ENCODE measurements at regions of chr17 and their contacts with region 1.

Region 1: DNA sequence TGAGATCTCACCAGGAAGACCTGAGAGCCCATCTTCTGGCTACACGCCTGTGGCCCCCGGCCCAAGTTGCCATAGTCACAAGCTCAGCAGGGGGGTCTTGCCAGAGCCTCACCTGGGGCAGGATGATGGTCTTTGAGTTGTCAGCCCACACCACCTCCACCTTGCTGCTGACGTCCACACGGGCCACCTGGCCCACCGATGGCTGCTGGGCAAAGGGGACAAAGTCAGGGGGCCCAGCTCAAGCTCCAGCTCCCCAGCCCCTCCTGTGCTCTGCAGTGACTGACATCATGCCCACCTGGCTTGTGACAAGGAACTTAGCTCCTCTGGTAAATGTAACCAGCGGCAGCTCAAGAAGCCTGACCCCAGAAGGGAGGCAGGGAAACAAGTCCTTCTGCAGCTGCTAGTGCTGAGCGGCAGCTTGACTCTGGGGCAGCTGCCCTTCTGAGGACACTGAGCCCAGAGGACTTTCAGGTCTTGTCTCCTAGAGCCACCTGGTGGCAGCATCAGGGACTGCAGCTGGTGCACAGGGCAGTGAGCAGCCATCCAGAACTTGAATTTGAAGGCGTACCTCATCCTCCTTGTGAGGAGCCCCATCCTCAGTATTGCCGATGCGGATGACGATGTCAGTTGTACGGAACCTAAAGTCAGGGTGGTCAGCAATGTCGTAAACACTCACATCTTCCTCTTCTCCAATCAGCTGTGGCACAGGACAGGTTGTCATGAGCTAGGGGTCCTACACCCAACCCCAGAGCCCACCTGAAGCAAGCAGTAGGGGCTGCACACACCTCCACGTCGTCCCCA is 13.5 kb downstream of the SPHK1 start:
- H3K4me3 ChIP-seq: no peak overlapping the region
- H3K27ac ChIP-seq: no peak overlapping the region
- H3K4me1 ChIP-seq: no peaks in the 10 kb centered on the region
- CTCF ChIP-seq: peak; percentile 86

Region 2: GRCh38 chr17:76296186-76296585 is 101.7 kb before region 1 on chr17:
- CTCF ChIA-PET with region 1: interaction called, 244 read pairs
- POLR2A ChIA-PET with region 1: no interaction called
- H3K4me3 ChIP-seq: no peak overlapping the region
- H3K27ac ChIP-seq: no peak overlapping the region
- H3K4me1 ChIP-seq: no peaks in the 10 kb centered on the region
- CTCF ChIP-seq: no peak

Region 3: GRCh38 chr17:76337413-76337777 is 60.5 kb before region 1 on chr17:
- CTCF ChIA-PET with region 1: interaction called, 14 read pairs
- POLR2A ChIA-PET with region 1: no interaction called
- H3K4me3 ChIP-seq: no peak overlapping the region
- H3K27ac ChIP-seq: no peak overlapping the region
- H3K4me1 ChIP-seq: peaks cover 4% of the 10 kb centered on the region; the same call in 1 of the 2 replicates
- CTCF ChIP-seq: no peak

Region 4: GRCh38 chr17:76384222-76384986 is 13.5 kb before region 1 on chr17 and contains the start of gene SPHK1:
- CTCF ChIA-PET with region 1: interaction called, 68 read pairs
- POLR2A ChIA-PET with region 1: interaction called, 3 read pairs
- H3K4me3 ChIP-seq: peak within 1 kb of the TSS; percentile 54
- H3K27ac ChIP-seq: peak within 1 kb of the TSS; percentile 77; the same call in 1 of the 2 replicates
- H3K4me1 ChIP-seq: peaks cover 8% of the 10 kb centered on the region; the same call in 1 of the 2 replicates
- CTCF ChIP-seq: peak; percentile 36; the same call in 1 of the 2 replicates

Region 5: DNA sequence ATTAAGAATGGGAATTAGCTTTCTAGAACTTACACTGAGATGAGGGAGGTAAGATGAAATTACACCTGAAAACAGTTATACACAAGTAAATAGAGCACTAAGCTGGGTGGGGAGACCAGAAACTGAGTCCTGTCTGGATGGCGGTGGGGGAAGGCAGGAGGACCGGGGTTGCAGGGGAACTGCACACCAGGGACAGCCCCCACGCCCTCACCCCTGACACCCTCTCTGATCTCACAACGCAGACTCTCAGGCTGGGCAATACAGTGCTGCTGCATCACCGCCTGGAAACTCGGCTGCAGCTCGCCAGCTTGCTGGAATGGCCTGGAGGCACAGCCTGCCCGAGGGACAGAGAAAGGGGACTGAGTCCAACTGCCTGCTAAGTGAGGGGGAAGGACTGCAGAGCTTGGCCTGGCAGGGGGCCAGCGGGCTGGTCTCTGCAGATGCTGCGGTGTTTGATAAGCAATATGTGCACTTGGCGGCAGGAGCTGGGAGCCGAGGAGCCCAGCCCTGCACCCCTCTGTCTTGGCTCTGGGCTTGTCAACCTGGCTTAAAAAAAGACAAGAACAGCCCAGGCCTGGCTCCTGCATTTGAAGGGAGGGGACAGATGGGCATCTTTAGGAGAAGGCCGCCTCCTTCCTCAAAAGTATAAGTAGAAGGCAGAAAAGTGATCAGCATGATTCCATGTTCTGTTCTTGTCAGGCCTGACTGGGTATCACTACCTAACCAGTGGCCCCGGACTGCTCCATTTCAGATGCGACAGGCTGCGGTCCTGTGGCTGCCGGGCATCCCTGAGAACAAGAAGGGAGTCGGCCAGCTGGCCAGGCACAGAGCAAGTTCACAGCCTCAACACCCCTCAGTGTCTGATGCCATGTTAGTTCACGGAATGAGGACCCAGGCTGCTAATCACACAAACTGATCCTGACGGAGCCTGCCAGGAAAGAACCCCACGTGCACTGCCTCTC is 16.7 kb after region 1 on chr17:
- CTCF ChIA-PET with region 1: interaction called, 90 read pairs
- POLR2A ChIA-PET with region 1: no interaction called
- H3K4me3 ChIP-seq: no peak overlapping the region
- H3K27ac ChIP-seq: peak overlapping the region; percentile 13; the same call in 1 of the 2 replicates
- H3K4me1 ChIP-seq: peaks cover 25% of the 10 kb centered on the region
- CTCF ChIP-seq: no peak

Region 6: DNA sequence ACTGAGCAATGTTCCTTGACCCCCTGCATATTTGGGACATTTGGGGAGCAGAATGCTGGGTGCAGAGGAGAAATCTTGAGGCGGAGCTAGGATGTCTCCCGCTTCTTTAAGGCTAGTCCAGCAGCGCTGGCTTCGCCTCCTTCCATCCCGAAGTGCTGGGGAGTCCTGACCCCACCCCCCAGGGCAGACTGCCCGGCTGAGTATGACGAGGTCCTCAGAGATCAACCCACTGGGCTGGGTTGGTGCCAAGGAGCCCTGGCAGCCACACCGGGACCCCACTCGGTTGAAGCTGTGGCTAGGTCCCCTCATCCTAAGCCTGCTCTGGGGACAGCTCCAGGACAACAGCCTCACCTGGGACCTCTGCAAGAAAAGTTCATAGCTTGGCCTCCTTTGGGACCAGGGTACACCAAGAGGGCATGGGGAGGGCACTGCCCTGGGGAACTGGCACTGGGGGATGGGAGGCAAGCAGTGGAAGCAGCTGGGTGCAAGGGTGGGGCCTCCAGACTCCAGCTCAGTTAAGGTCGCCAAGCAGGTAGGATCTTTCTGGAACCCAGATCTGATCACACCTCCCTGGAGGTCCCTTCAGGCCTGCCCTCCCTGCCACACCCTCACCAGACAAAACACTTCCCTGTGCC is 92.3 kb after region 1 on chr17:
- CTCF ChIA-PET with region 1: no interaction called
- POLR2A ChIA-PET with region 1: no interaction called
- H3K4me3 ChIP-seq: no peak overlapping the region
- H3K27ac ChIP-seq: no peak overlapping the region
- H3K4me1 ChIP-seq: no peaks in the 10 kb centered on the region
- CTCF ChIP-seq: no peak

Region 7: GRCh38 chr17:76501018-76501826 is 103.3 kb after region 1 on chr17 and contains the start of gene RHBDF2:
- CTCF ChIA-PET with region 1: interaction called, 58 read pairs
- POLR2A ChIA-PET with region 1: interaction called, 8 read pairs
- H3K4me3 ChIP-seq: peak within 1 kb of the TSS; percentile 66
- H3K27ac ChIP-seq: peak within 1 kb of the TSS; percentile 39; the same call in 1 of the 2 replicates
- H3K4me1 ChIP-seq: peaks cover 16% of the 10 kb centered on the region
- CTCF ChIP-seq: no peak

Region 8: GRCh38 chr17:76515274-76515949 is 117.5 kb after region 1 on chr17:
- CTCF ChIA-PET with region 1: no interaction called
- POLR2A ChIA-PET with region 1: no interaction called
- H3K4me3 ChIP-seq: no peak overlapping the region
- H3K27ac ChIP-seq: no peak overlapping the region
- H3K4me1 ChIP-seq: no peaks in the 10 kb centered on the region
- CTCF ChIP-seq: no peak

Region 9: GRCh38 chr17:76527430-76528111 is 129.7 kb after region 1 on chr17:
- CTCF ChIA-PET with region 1: no interaction called
- POLR2A ChIA-PET with region 1: no interaction called
- H3K4me3 ChIP-seq: no peak overlapping the region
- H3K27ac ChIP-seq: no peak overlapping the region
- H3K4me1 ChIP-seq: peaks cover 16% of the 10 kb centered on the region
- CTCF ChIP-seq: no peak

Region 10: DNA sequence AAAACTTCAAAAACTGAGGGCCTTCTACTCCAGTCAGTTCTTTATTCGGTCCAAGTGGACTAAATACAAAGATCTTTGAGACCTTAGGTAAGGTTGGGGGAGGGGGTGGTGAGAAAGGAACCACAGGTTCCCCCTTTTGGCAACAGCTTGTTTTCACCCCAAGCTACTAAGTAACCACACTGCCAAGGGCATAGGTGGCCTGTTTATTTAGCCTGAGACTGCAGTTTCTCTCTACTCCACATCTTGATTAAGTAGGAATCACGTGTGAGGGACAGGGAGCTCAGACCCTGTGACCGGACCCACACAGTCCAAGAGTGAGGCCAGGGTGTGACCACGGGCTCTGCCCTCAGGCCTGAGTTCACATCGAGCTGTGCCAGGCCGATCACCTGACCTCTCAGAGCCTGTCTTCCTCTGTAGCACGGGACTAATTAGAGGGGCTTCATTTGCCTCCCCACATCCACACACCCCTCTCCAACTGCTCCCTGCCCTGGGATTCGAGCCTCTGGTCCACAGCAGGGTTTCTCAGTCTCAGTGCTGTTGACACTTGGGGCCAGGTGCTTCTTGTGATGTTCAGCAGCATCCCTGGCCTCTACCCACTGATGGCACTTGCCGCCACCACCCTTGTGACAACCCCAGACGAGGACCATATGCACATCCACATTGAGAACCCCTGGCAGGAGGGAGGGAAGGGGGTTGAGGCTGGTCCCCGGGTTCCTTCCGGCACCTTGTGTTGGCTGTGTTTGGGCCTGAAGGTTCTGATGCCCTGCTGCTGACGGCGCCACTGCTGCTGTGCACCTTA is 169.9 kb after region 1 on chr17:
- CTCF ChIA-PET with region 1: no interaction called
- POLR2A ChIA-PET with region 1: no interaction called
- H3K4me3 ChIP-seq: no peak overlapping the region
- H3K27ac ChIP-seq: 0 out of 2 replicates have a peak overlapping the region, but pooled peaks have one; percentile 5
- H3K4me1 ChIP-seq: no peaks in the 10 kb centered on the region
- CTCF ChIP-seq: no peak

Measured in HEK293 (cell line).